ENCODE measurements at regions of chr15 and their contacts with region 1.

Region 1: GRCh38 chr15:81265944-81266775 is 57.8 kb downstream of the STARD5 start:
- DNase-seq: peak; percentile 80
- H3K4me3 ChIP-seq: no peak overlapping the region
- H3K27ac ChIP-seq: no peak overlapping the region
- H3K4me1 ChIP-seq: peaks cover 5% of the 10 kb centered on the region
- H3K27me3 ChIP-seq: peaks cover 0 to 2% of the 10 kb centered on the region in 2 experiments
- CTCF ChIP-seq: peak; percentile 93 to 94
- POLR2A ChIP-seq: no peak

Region 2: DNA sequence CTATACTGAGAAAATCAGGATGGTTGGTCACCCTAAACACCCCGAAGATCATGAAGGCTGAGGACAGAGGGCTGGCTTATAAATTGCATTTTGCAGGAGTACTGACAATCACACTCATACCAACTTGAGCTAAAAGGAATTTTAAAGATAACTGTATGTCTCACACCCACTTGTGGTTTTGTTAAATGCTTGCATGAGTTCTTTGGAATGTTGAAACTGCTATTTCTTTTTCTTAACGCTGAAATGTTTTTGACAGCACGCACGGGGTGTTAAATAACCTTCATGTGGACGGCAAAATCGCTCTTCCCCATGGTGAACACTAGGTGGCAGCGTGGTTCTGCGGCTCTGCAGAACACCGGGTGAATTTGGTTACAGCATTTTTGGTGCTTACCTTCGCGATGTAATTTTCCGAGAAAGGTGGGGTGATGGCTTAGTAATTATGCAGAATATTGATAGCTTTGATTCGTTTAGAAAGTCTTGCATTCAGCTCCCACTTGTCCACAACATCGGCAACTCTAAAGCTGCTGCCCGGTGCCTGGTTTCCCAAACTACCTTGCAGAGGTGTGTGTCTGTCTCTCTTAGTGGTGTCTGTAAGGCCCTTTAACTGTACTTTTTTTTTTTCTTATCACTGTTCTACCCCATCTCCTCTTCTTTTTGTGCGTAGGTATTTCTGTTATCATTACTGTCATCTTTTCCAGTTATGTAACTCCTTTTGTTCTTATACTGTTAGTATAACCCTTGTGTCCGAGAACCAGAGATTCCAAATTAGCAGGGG is 810.3 kb before region 1 on chr15:
- CTCF ChIA-PET with region 1: interaction called, 20 read pairs
- POLR2A ChIA-PET with region 1: no interaction called
- dilution Hi-C with region 1: no loop called
- intact Hi-C with region 1: loop called (anchors 1 kb)
- DNase-seq: peak; percentile 63
- H3K4me3 ChIP-seq: no peak overlapping the region
- H3K27ac ChIP-seq: no peak overlapping the region
- H3K4me1 ChIP-seq: no peaks in the 10 kb centered on the region
- H3K27me3 ChIP-seq: peaks cover 1 to 3% of the 10 kb centered on the region in 2 experiments
- CTCF ChIP-seq: peak; percentile 85 to 94
- POLR2A ChIP-seq: no peak

Region 3: DNA sequence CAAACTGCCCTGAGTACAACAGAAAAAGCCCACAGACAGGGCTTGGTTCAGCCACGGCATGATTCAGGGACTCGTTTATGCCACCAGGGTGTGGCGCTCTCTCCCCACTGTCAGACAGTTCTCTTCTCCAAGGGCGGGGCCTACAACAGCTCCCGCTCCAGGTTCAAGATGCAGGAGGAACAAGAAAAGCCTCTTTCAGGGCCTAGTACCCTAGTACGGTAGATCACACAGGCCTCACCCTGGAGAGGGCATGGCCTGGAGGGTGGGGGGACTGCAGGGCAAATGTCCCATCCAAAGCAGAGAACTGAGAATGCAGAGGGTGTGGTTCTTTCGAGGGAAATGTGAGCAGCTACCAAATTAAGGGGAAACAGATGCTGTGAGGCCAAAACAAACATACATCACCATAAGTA is 288.5 kb before region 1 on chr15:
- CTCF ChIA-PET with region 1: interaction called, 199 read pairs
- POLR2A ChIA-PET with region 1: no interaction called
- dilution Hi-C with region 1: no loop called
- intact Hi-C with region 1: loop called (anchors 1 kb)
- DNase-seq: peak; percentile 62
- H3K4me3 ChIP-seq: no peak overlapping the region
- H3K27ac ChIP-seq: no peak overlapping the region
- H3K4me1 ChIP-seq: peaks cover 10% of the 10 kb centered on the region
- H3K27me3 ChIP-seq: no peaks in the 10 kb centered on the region
- CTCF ChIP-seq: peak; percentile 63 to 83
- POLR2A ChIP-seq: no peak

Region 4: GRCh38 chr15:81098861-81099651 is 167.1 kb before region 1 on chr15:
- CTCF ChIA-PET with region 1: interaction called, 271 read pairs
- POLR2A ChIA-PET with region 1: no interaction called
- dilution Hi-C with region 1: no loop called
- intact Hi-C with region 1: no loop called
- DNase-seq: peak; percentile 66
- H3K4me3 ChIP-seq: no peak overlapping the region
- H3K27ac ChIP-seq: no peak overlapping the region
- H3K4me1 ChIP-seq: peaks cover 13% of the 10 kb centered on the region
- H3K27me3 ChIP-seq: no peaks in the 10 kb centered on the region
- CTCF ChIP-seq: no peak
- POLR2A ChIP-seq: no peak

Region 5: DNA sequence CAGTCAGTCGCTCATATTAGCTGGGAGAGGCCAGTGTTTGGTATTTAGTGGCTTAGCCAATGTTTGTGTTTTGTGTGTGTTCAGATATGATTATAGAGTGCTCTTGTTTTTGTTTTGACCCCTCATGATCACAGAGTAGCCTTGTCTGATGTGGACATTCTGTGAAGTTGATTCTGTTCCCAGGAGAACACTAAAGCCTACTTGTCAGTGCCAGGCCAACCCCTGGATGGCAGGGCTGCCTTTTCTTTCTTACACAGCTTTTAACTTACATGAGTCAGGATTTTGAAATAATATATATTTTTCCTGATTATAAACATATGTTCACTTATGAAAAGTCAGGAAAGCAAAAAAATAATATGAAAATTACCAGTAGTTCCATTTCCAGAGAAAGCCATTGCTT is 120.2 kb before region 1 on chr15:
- CTCF ChIA-PET with region 1: interaction called, 472 read pairs
- POLR2A ChIA-PET with region 1: interaction called, 6 read pairs
- dilution Hi-C with region 1: no loop called
- intact Hi-C with region 1: no loop called
- DNase-seq: no peak
- H3K4me3 ChIP-seq: no peak overlapping the region
- H3K27ac ChIP-seq: no peak overlapping the region
- H3K4me1 ChIP-seq: no peaks in the 10 kb centered on the region
- H3K27me3 ChIP-seq: no peaks in the 10 kb centered on the region
- CTCF ChIP-seq: no peak
- POLR2A ChIP-seq: no peak

Region 6: GRCh38 chr15:81244306-81244705 is 21.9 kb before region 1 on chr15:
- CTCF ChIA-PET with region 1: interaction called, 20 read pairs
- POLR2A ChIA-PET with region 1: no interaction called
- dilution Hi-C with region 1: no loop called
- intact Hi-C with region 1: no loop called
- DNase-seq: no peak
- H3K4me3 ChIP-seq: no peak overlapping the region
- H3K27ac ChIP-seq: no peak overlapping the region
- H3K4me1 ChIP-seq: no peaks in the 10 kb centered on the region
- H3K27me3 ChIP-seq: peaks cover 0 to 3% of the 10 kb centered on the region in 2 experiments
- CTCF ChIP-seq: no peak
- POLR2A ChIP-seq: no peak

Region 7: DNA sequence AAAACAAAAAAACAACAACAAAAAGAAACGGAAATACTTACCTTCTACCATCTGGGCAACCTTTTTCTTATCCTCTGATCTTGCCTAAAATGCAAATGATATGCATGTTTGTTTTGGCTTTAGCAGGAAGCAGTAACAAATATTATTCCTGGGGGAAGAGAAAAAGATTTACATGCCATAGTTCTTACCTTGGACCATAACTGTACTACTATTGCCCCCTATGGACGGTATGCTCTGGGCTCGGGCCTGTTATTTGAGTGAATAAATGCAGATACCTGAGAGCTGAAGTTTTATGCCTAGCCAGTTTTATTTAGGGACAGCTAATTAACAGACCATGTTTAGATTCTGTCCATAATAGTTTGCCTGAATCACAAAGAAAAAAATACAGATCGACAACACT is 70.4 kb after region 1 on chr15:
- CTCF ChIA-PET with region 1: interaction called, 10 read pairs
- POLR2A ChIA-PET with region 1: no interaction called
- dilution Hi-C with region 1: no loop called
- intact Hi-C with region 1: no loop called
- DNase-seq: peak; percentile 23
- H3K4me3 ChIP-seq: no peak overlapping the region
- H3K27ac ChIP-seq: no peak overlapping the region
- H3K4me1 ChIP-seq: peaks cover 4% of the 10 kb centered on the region
- H3K27me3 ChIP-seq: peaks cover 3 to 8% of the 10 kb centered on the region in 2 experiments
- CTCF ChIP-seq: peak in 1 of 2 donors; percentile 6
- POLR2A ChIP-seq: no peak